Calu3 (cell line): ENCODE measurements at regions of chr17 and their contacts with region 1.

Region 1: GRCh38 chr17:40433551-40434415 is 9.5 kb upstream of the IGFBP4 start:
- DNase-seq: peak; percentile 94
- H3K4me3 Mint-ChIP-seq: no peak overlapping the region
- H3K27ac Mint-ChIP-seq: no peak overlapping the region
- H3K4me1 Mint-ChIP-seq: no peaks in the 10 kb centered on the region
- H3K27me3 Mint-ChIP-seq: peaks cover 43% of the 10 kb centered on the region
- CTCF ChIP-seq: no peak

Region 2: GRCh38 chr17:40474419-40475002 is 40.7 kb after region 1 on chr17:
- CTCF ChIA-PET with region 1: interaction called, 1,658 read pairs
- intact Hi-C with region 1: no loop called
- DNase-seq: no peak
- H3K4me3 Mint-ChIP-seq: no peak overlapping the region
- H3K27ac Mint-ChIP-seq: no peak overlapping the region
- H3K4me1 Mint-ChIP-seq: no peaks in the 10 kb centered on the region
- H3K27me3 Mint-ChIP-seq: peaks cover 65% of the 10 kb centered on the region
- CTCF ChIP-seq: no peak

Region 3: GRCh38 chr17:40522250-40522952 is 88.6 kb after region 1 on chr17:
- CTCF ChIA-PET with region 1: interaction called, 4,142 read pairs
- intact Hi-C with region 1: no loop called
- DNase-seq: no peak
- H3K4me3 Mint-ChIP-seq: no peak overlapping the region
- H3K27ac Mint-ChIP-seq: no peak overlapping the region
- H3K4me1 Mint-ChIP-seq: peaks cover 32% of the 10 kb centered on the region
- H3K27me3 Mint-ChIP-seq: peaks cover 30% of the 10 kb centered on the region
- CTCF ChIP-seq: no peak